H1 (cell line): ENCODE measurements at regions of chr6 and their contacts with region 1.

Region 1: GRCh38 chr6:26122793-26123674 is 35.8 kb downstream of the HFE start:
- DNase-seq: peak; percentile 84 to 95
- H3K4me3 ChIP-seq: peak overlapping the region; percentile 82 to 100 (median 98)
- H3K27ac ChIP-seq: peak overlapping the region; percentile 91
- H3K4me1 ChIP-seq: peaks cover 1 to 9% (median 4%) of the 10 kb centered on the region in 4 experiments; a peak in 4 of 7 replicates
- H3K27me3 ChIP-seq: no peaks in the 10 kb centered on the region
- CTCF ChIP-seq: no peak
- EP300 ChIP-seq: peak in 1 of 2 experiments; percentile 98; a peak in 2 of 3 replicates
- POLR2A ChIP-seq: peak; percentile 96 to 97
- RAD21 ChIP-seq: no peak

Region 2: DNA sequence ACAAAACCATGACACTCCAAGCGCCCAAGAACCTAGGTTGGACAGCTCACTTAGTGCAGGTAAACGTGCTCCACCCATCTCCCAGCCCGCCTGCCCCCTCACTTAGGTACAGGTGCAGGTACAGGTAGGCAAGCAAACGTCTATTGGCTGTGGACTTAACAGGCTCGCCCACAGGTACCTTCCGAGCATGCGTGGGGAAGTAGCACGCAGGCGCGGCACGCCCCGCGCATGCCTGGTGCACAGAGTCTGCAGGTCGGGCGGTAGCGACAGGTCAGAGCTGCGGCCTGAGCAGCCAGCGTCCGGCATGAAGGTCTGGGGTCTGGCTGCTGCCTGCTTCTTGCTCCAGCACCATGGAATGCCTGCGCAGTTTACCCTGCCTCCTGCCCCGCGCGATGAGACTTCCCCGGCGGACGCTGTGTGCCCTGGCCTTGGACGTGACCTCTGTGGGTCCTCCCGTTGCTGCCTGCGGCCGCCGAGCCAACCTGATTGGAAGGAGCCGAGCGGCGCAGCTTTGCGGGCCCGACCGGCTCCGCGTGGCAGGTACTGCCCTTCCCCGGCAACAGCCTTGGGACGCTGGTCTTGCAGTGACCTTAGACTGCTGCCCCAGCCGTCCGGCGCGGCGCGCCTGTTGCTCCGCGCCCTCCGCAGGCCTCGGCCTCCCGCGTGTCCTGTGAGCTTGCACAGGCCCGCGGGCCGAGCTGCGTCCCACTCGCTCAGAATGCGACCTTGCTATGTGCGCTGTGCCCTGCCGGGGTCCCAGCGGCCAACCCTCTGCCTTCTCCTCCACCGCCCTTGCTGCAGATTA is 1720.1 kb before region 1 on chr6 and contains the start of gene MRS2:
- CTCF ChIA-PET with region 1: no interaction called
- POLR2A ChIA-PET with region 1: no interaction called
- DNase-seq: peak; percentile 78 to 90
- H3K4me3 ChIP-seq: peak within 1 kb of the TSS; percentile 73 to 94 (median 86)
- H3K27ac ChIP-seq: peak within 1 kb of the TSS; percentile 80
- H3K4me1 ChIP-seq: peaks cover 5 to 21% (median 12%) of the 10 kb centered on the region in 4 experiments
- H3K27me3 ChIP-seq: no peaks in the 10 kb centered on the region
- CTCF ChIP-seq: no peak
- EP300 ChIP-seq: no peak
- POLR2A ChIP-seq: peak; percentile 66 to 90
- RAD21 ChIP-seq: no peak
- total RNA-seq, gene MRS2: 67.5 and 68.4 TPM in 2 replicates

Region 3: GRCh38 chr6:25971187-25971811 is 151.7 kb before region 1 on chr6:
- CTCF ChIA-PET with region 1: no interaction called
- POLR2A ChIA-PET with region 1: no interaction called
- DNase-seq: no peak
- H3K4me3 ChIP-seq: no peak overlapping the region
- H3K27ac ChIP-seq: no peak overlapping the region
- H3K4me1 ChIP-seq: peaks cover 3 to 6% (median 5%) of the 10 kb centered on the region in 4 experiments; a peak in 6 of 7 replicates
- H3K27me3 ChIP-seq: no peaks in the 10 kb centered on the region; a peak in 4 of 7 replicates
- CTCF ChIP-seq: no peak
- EP300 ChIP-seq: no peak
- POLR2A ChIP-seq: no peak
- RAD21 ChIP-seq: no peak

Region 4: DNA sequence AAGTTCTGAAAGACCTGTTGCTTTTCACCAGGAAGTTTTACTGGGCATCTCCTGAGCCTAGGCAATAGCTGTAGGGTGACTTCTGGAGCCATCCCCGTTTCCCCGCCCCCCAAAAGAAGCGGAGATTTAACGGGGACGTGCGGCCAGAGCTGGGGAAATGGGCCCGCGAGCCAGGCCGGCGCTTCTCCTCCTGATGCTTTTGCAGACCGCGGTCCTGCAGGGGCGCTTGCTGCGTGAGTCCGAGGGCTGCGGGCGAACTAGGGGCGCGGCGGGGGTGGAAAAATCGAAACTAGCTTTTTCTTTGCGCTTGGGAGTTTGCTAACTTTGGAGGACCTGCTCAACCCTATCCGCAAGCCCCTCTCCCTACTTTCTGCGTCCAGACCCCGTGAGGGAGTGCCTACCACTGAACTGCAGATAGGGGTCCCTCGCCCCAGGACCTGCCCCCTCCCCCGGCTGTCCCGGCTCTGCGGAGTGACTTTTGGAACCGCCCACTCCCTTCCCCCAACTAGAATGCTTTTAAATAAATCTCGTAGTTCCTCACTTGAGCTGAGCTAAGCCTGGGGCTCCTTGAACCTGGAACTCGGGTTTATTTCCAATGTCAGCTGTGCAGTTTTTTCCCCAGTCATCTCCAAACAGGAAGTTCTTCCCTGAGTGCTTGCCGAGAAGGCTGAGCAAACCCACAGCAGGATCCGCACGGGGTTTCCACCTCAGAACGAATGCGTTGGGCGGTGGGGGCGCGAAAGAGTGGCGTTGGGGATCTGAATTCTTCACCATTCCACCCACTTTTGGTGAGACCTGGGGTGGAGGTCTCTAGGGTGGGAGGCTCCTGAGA is 35.5 kb before region 1 on chr6 and contains the start of gene HFE:
- CTCF ChIA-PET with region 1: no interaction called
- POLR2A ChIA-PET with region 1: interaction called, 23 read pairs
- DNase-seq: peak in 1 of 2 experiments; percentile 73
- H3K4me3 ChIP-seq: peak within 1 kb of the TSS; percentile 48 to 65 (median 62)
- H3K27ac ChIP-seq: no peak within 1 kb of the TSS
- H3K4me1 ChIP-seq: peaks cover 0 to 5% (median 1%) of the 10 kb centered on the region in 4 experiments; a peak in 3 of 7 replicates
- H3K27me3 ChIP-seq: no peaks in the 10 kb centered on the region
- CTCF ChIP-seq: peak in 1 of 3 experiments; percentile 1; a peak in 1 of 4 replicates
- EP300 ChIP-seq: no peak
- POLR2A ChIP-seq: peak in 1 of 2 experiments; percentile 55; a peak in 1 of 3 replicates
- RAD21 ChIP-seq: no peak
- total RNA-seq, gene HFE: 1.6 and 2.0 TPM in 2 replicates

Region 5: DNA sequence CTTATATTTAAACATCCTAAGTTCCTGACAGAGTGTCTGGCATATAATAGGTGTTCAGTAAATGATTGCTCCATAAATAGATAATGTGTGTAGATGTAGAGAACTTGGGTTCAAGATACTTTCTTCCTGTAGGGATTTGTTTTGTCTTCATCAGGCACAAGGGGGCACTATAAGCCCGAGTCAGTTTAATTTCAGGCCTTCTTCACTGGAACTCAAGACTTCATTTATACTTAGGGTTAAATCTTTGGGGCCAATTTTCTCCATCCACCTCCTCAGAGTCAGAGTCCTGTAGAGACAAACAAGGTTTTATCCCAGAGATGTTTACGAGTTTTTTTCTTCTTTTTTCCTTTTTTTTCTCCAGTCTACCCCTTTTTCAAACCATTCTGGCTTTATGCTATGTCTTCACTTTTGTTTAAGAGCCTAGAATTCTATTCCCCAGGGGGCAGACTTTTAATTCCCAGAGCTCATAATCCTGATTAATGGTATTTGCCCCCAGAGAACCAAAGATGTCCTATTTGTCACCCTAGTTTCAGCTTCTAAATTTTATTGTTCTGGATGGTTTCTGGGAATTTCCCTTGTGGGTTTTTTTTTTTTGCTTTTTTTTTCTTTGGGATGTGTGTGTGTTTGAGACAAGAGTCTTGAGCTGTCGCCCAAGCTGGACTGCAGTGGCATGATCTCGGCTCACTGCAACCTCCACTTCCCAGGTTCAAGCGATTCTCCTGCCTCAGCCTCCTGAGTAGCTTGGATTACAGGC is 52.6 kb after region 1 on chr6:
- CTCF ChIA-PET with region 1: no interaction called
- POLR2A ChIA-PET with region 1: interaction called, 51 read pairs
- DNase-seq: peak in 1 of 2 experiments; percentile 54
- H3K4me3 ChIP-seq: 0 out of 8 replicates have a peak overlapping the region, but pooled peaks of 1 of the 4 experiments have one; percentile 14
- H3K27ac ChIP-seq: no peak overlapping the region
- H3K4me1 ChIP-seq: peaks cover 0 to 2% (median 0%) of the 10 kb centered on the region in 4 experiments; a peak in 3 of 7 replicates
- H3K27me3 ChIP-seq: no peaks in the 10 kb centered on the region
- CTCF ChIP-seq: peak in 2 of 3 experiments; percentile 51 to 65; a peak in 2 of 4 replicates
- EP300 ChIP-seq: no peak
- POLR2A ChIP-seq: no peak
- RAD21 ChIP-seq: peak; percentile 79 to 83

Region 6: GRCh38 chr6:26234421-26235296 is 111.6 kb after region 1 on chr6:
- CTCF ChIA-PET with region 1: no interaction called
- POLR2A ChIA-PET with region 1: interaction called, 79 read pairs
- DNase-seq: peak in 1 of 2 experiments; percentile 85
- H3K4me3 ChIP-seq: peak overlapping the region; percentile 83 to 91 (median 88)
- H3K27ac ChIP-seq: peak overlapping the region; percentile 93
- H3K4me1 ChIP-seq: peaks cover 0 to 3% (median 0%) of the 10 kb centered on the region in 4 experiments; a peak in 3 of 7 replicates
- H3K27me3 ChIP-seq: no peaks in the 10 kb centered on the region
- CTCF ChIP-seq: no peak
- EP300 ChIP-seq: no peak
- POLR2A ChIP-seq: peak; percentile 86
- RAD21 ChIP-seq: no peak

Region 7: GRCh38 chr6:27132532-27133280 is 1009.7 kb after region 1 on chr6:
- CTCF ChIA-PET with region 1: no interaction called
- POLR2A ChIA-PET with region 1: interaction called, 25 read pairs
- DNase-seq: peak; percentile 95 to 98
- H3K4me3 ChIP-seq: peak overlapping the region; percentile 89 to 98 (median 90)
- H3K27ac ChIP-seq: peak overlapping the region; percentile 96
- H3K4me1 ChIP-seq: peaks cover 0 to 5% (median 0%) of the 10 kb centered on the region in 4 experiments; a peak in 2 of 7 replicates
- H3K27me3 ChIP-seq: no peaks in the 10 kb centered on the region
- CTCF ChIP-seq: no peak
- EP300 ChIP-seq: no peak
- POLR2A ChIP-seq: peak; percentile 98 to 99
- RAD21 ChIP-seq: no peak

Region 8: DNA sequence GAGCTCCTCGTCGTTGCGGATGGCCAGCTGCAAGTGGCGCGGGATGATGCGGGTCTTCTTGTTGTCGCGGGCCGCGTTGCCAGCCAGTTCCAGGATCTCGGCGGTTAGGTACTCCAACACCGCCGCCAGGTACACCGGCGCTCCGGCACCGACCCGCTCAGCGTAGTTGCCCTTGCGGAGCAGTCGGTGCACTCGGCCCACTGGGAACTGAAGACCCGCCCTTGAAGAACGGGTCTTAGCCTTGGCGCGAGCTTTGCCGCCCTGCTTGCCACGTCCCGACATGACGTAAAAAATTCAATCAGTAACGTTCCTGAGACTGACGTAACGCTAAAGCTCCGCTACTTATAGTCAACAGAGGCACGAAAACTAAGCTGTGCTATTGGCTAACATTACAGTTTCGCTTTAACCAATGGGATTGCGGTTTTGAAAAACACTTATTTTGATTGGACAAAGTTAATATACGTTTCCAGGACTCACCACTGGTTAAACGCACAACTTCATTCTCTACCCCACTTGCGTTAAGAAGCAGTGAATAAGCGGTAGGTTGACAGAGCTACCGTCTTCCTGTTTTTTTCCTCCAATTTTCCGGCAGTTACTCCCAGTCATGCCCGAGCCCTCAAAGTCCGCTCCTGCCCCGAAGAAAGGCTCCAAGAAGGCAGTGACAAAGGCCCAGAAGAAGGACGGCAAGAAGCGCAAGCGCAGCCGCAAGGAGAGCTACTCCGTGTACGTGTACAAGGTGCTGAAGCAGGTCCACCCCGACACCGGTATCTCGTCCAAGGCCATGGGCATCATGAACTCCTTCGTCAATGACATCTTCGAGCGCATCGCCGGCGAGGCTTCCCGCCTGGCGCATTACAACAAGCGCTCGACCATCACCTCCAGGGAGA is 1715.3 kb after region 1 on chr6:
- CTCF ChIA-PET with region 1: no interaction called
- POLR2A ChIA-PET with region 1: interaction called, 35 read pairs
- DNase-seq: peak; percentile 76 to 87
- H3K4me3 ChIP-seq: peak overlapping the region; percentile 77 to 96 (median 93)
- H3K27ac ChIP-seq: peak overlapping the region; percentile 98
- H3K4me1 ChIP-seq: peaks cover 0 to 5% (median 2%) of the 10 kb centered on the region in 4 experiments; a peak in 1 of 7 replicates
- H3K27me3 ChIP-seq: no peaks in the 10 kb centered on the region
- CTCF ChIP-seq: no peak
- EP300 ChIP-seq: no peak
- POLR2A ChIP-seq: peak; percentile 88 to 91
- RAD21 ChIP-seq: no peak